CD4-positive, alpha-beta T cell (primary cell): ENCODE measurements at regions of chr12 and their contacts with region 1.

Region 1: GRCh38 chr12:106179086-106179485 is 40.3 kb upstream of the NUAK1 start:
- DNase-seq: no peak
- ATAC-seq: no peak
- H3K4me3 ChIP-seq: no peak overlapping the region
- H3K4me3 Mint-ChIP-seq: no peak overlapping the region
- H3K27ac ChIP-seq: no peak overlapping the region
- H3K27ac Mint-ChIP-seq: no peak overlapping the region
- H3K4me1 ChIP-seq: no peaks in the 10 kb centered on the region
- H3K4me1 Mint-ChIP-seq: no peaks in the 10 kb centered on the region
- H3K27me3 ChIP-seq: peaks cover 0 to 4% of the 10 kb centered on the region in 2 experiments
- H3K27me3 Mint-ChIP-seq: peaks cover 27% of the 10 kb centered on the region
- CTCF ChIP-seq: no peak

Region 2: GRCh38 chr12:107219301-107219700 is 1040.2 kb after region 1 on chr12:
- CTCF ChIA-PET with region 1: no interaction called
- POLR2A ChIA-PET with region 1: no interaction called
- intact Hi-C with region 1: loop called in 1 of 2 experiments (anchors 10 kb)
- DNase-seq: no peak
- ATAC-seq: no peak
- H3K4me3 ChIP-seq: no peak overlapping the region
- H3K4me3 Mint-ChIP-seq: no peak overlapping the region
- H3K27ac ChIP-seq: no peak overlapping the region
- H3K27ac Mint-ChIP-seq: no peak overlapping the region
- H3K4me1 ChIP-seq: no peaks in the 10 kb centered on the region
- H3K4me1 Mint-ChIP-seq: no peaks in the 10 kb centered on the region
- H3K27me3 ChIP-seq: peaks cover 0 to 2% of the 10 kb centered on the region in 2 experiments
- H3K27me3 Mint-ChIP-seq: peaks cover 23% of the 10 kb centered on the region
- CTCF ChIP-seq: no peak